Stomach (tissue), 19 donors: ENCODE measurements at regions of chr7 and their contacts with region 1.

Region 1: DNA sequence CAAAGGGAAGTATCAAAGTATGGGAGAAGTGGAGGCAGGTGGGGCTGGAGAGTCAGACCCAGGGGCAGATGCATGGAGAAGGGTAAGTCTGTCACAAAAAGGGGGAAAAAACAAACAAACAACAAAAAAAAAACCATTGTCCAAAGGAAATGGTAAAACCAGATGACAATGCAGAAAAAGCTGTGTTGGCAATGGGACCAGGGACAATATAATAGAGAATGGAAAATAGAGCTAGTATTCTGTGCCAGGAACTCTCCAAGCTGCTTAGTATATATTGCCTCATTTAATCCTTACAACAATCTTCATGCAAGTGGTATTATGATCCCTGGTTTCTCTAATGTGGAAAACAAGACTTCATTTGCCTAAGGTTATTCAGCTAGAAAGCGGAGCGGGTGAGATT is 13.1 kb upstream of the KDM7A start:
- DNase-seq: no peak
- H3K4me3 ChIP-seq: no peak overlapping the region
- H3K27ac ChIP-seq: no peak overlapping the region
- H3K4me1 ChIP-seq: no peaks in the 10 kb centered on the region
- H3K27me3 ChIP-seq: no peaks in the 10 kb centered on the region
- CTCF ChIP-seq: no peak
- EP300 ChIP-seq: no peak
- POLR2A ChIP-seq: no peak

Region 2: DNA sequence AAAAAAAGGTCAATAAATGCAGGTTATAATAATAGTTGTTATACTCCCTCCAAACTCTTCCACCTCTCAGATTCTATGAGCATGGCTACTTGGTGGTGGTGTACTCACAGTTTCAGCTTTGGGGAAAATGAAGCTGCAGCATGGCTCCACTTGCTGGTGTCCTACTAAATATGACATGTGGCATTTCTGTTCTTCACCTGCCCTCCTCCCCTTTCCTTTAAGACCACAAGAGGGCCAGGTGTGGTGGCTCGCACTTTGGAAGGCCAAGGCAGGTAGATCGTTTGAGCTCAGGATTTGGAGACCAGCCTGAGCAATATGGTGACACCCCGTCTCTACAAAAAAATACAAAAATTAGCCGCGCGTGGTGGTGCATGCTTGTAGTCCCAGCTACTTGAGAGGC is 107.3 kb after region 1 on chr7:
- intact Hi-C with region 1: loop called (anchors 10 kb)
- DNase-seq: no peak
- H3K4me3 ChIP-seq: no peak overlapping the region
- H3K27ac ChIP-seq: no peak overlapping the region
- H3K4me1 ChIP-seq: no peaks in the 10 kb centered on the region
- H3K27me3 ChIP-seq: no peaks in the 10 kb centered on the region
- CTCF ChIP-seq: peak in 1 of 7 experiments; percentile 8
- EP300 ChIP-seq: no peak
- POLR2A ChIP-seq: no peak